Activated CD8-positive, alpha-beta T cell treated with anti-CD3 and anti-CD28 coated beads for 36 hours (primary cell): ENCODE measurements at regions of chr11 and their contacts with region 1.

Region 1: GRCh38 chr11:36746886-36747710 is 149.1 kb upstream of the RAG2 start:
- DNase-seq: peak; percentile 94
- ATAC-seq: peak; percentile 100
- H3K4me3 Mint-ChIP-seq: no peak overlapping the region
- H3K27ac Mint-ChIP-seq: no peak overlapping the region
- H3K4me1 Mint-ChIP-seq: peaks cover 3% of the 10 kb centered on the region
- H3K27me3 Mint-ChIP-seq: peaks cover 21% of the 10 kb centered on the region
- CTCF ChIP-seq: peak; percentile 93

Region 2: GRCh38 chr11:36558571-36559413 is 188.3 kb before region 1 on chr11:
- CTCF ChIA-PET with region 1: interaction called, 201 read pairs
- POLR2A ChIA-PET with region 1: interaction called, 3 read pairs
- intact Hi-C with region 1: no loop called
- DNase-seq: no peak
- ATAC-seq: peak; percentile 69
- H3K4me3 Mint-ChIP-seq: peak overlapping the region; percentile 34
- H3K27ac Mint-ChIP-seq: peak overlapping the region; percentile 49
- H3K4me1 Mint-ChIP-seq: peaks cover 19% of the 10 kb centered on the region
- H3K27me3 Mint-ChIP-seq: peaks cover under 1% of the 10 kb centered on the region
- CTCF ChIP-seq: no peak

Region 3: GRCh38 chr11:36577859-36578258 is 169.2 kb before region 1 on chr11:
- CTCF ChIA-PET with region 1: interaction called, 15 read pairs
- POLR2A ChIA-PET with region 1: no interaction called
- intact Hi-C with region 1: no loop called
- DNase-seq: no peak
- ATAC-seq: no peak
- H3K4me3 Mint-ChIP-seq: no peak overlapping the region
- H3K27ac Mint-ChIP-seq: no peak overlapping the region
- H3K4me1 Mint-ChIP-seq: no peaks in the 10 kb centered on the region
- H3K27me3 Mint-ChIP-seq: peaks cover 13% of the 10 kb centered on the region
- CTCF ChIP-seq: no peak

Region 4: GRCh38 chr11:36622431-36623136 is 124.5 kb before region 1 on chr11:
- CTCF ChIA-PET with region 1: no interaction called
- POLR2A ChIA-PET with region 1: no interaction called
- intact Hi-C with region 1: no loop called
- DNase-seq: no peak
- ATAC-seq: no peak
- H3K4me3 Mint-ChIP-seq: no peak overlapping the region
- H3K27ac Mint-ChIP-seq: no peak overlapping the region
- H3K4me1 Mint-ChIP-seq: no peaks in the 10 kb centered on the region
- H3K27me3 Mint-ChIP-seq: peaks cover 11% of the 10 kb centered on the region
- CTCF ChIP-seq: no peak

Region 5: DNA sequence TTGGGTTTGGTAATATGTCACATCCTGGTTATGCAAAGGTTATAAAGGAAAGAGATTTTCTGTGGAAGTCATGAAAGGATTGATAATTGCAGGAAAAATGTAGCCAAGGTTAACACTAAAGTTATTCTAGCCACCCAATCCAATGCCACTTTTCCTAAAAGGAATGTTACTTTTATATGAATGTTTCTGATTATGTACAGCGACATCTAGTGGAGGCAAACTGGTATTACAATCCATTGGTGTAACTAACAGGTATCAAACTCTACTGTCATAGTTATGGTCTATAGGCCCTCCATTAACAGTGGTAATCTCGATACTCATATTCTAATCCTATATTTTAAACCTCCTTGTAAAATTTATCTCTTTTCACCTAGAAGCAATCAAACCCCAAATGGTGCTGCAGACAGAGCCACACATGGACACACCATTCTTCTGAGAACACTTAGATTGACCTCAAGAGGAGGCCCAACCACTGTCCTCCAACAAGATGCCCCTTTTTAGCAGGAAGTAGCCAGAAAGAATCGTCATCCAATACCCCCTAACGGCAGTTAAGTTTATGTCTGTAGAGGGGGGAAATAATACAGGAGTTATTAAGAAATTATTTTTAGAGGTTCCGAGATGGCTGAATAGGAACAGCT is 74.2 kb before region 1 on chr11:
- CTCF ChIA-PET with region 1: interaction called, 12 read pairs
- POLR2A ChIA-PET with region 1: no interaction called
- intact Hi-C with region 1: no loop called
- DNase-seq: peak; percentile 4
- ATAC-seq: no peak
- H3K4me3 Mint-ChIP-seq: no peak overlapping the region
- H3K27ac Mint-ChIP-seq: no peak overlapping the region
- H3K4me1 Mint-ChIP-seq: no peaks in the 10 kb centered on the region
- H3K27me3 Mint-ChIP-seq: peaks cover 17% of the 10 kb centered on the region
- CTCF ChIP-seq: peak; percentile 93

Region 6: GRCh38 chr11:36702330-36703055 is 44.6 kb before region 1 on chr11:
- CTCF ChIA-PET with region 1: interaction called, 77 read pairs
- POLR2A ChIA-PET with region 1: no interaction called
- intact Hi-C with region 1: loop called (anchors 2 kb)
- DNase-seq: peak; percentile 19
- ATAC-seq: no peak
- H3K4me3 Mint-ChIP-seq: no peak overlapping the region
- H3K27ac Mint-ChIP-seq: no peak overlapping the region
- H3K4me1 Mint-ChIP-seq: peaks cover 2% of the 10 kb centered on the region
- H3K27me3 Mint-ChIP-seq: peaks cover 20% of the 10 kb centered on the region
- CTCF ChIP-seq: peak; percentile 67

Region 7: DNA sequence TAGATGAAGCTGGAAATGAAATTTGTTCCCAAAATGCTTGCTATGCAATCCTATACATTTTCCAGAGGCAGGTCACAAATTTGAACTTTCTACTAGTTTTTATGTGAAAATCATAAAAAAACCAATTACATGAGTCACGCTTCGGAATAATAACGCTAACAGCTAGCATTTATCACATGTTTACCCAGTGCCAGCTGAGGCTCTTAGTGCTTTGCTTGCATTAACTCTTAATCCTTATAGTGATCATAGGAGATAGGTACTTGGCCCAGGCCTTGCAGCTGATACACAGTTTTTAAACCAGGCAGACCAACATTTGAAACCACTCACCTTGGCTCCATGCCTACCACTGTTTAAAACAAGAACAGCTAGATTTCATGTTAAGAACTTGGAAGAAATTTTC is 17.3 kb before region 1 on chr11:
- CTCF ChIA-PET with region 1: interaction called, 18 read pairs
- POLR2A ChIA-PET with region 1: no interaction called
- intact Hi-C with region 1: no loop called
- DNase-seq: no peak
- ATAC-seq: no peak
- H3K4me3 Mint-ChIP-seq: no peak overlapping the region
- H3K27ac Mint-ChIP-seq: no peak overlapping the region
- H3K4me1 Mint-ChIP-seq: no peaks in the 10 kb centered on the region
- H3K27me3 Mint-ChIP-seq: no peaks in the 10 kb centered on the region
- CTCF ChIP-seq: no peak